HepG2 (cell line): ENCODE measurements at regions of chr22 and their contacts with region 1.

Region 1: GRCh38 chr22:28051787-28052356 is 132.8 kb upstream of the PITPNB start:
- DNase-seq: peak; percentile 43
- ATAC-seq: peak; percentile 77
- H3K4me3 ChIP-seq: no peak overlapping the region
- H3K27ac ChIP-seq: no peak overlapping the region
- H3K4me1 ChIP-seq: peaks cover 7% of the 10 kb centered on the region
- H3K27me3 ChIP-seq: no peaks in the 10 kb centered on the region
- CTCF ChIP-seq: peak; percentile 80
- EP300 ChIP-seq: no peak
- POLR2A ChIP-seq: no peak
- RAD21 ChIP-seq: peak; percentile 64

Region 2: DNA sequence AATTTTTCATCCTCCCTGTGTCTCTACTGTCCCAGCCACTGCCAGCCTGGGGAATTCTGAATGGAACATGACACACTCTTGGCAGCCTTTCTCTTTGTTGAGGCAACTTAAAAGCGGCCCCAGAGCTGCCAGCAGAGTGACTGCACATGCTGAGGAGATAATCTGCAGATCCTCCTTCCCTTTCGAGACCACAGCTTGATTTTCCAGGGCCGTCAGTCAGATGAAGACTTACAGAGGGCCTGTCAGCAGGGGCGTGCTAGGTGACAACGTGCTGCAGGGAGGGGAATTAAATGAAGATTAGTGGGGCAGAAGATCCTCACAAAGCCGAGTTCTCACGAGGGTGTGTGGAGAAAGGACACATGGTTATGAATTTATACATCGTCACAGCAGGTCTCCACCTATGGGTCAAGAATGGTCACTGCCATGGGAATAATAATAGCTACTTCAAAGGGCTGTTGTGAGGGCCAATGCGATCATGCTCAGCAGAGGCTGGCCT is 60.7 kb after region 1 on chr22:
- CTCF ChIA-PET with region 1: no interaction called
- POLR2A ChIA-PET with region 1: no interaction called
- in situ Hi-C with region 1: no loop called
- intact Hi-C with region 1: loop called (anchors 1 kb)
- DNase-seq: peak; percentile 25
- ATAC-seq: peak; percentile 84
- H3K4me3 ChIP-seq: no peak overlapping the region
- H3K27ac ChIP-seq: no peak overlapping the region
- H3K4me1 ChIP-seq: no peaks in the 10 kb centered on the region
- H3K27me3 ChIP-seq: no peaks in the 10 kb centered on the region
- CTCF ChIP-seq: peak; percentile 60
- EP300 ChIP-seq: no peak
- POLR2A ChIP-seq: no peak
- RAD21 ChIP-seq: no peak

Region 3: DNA sequence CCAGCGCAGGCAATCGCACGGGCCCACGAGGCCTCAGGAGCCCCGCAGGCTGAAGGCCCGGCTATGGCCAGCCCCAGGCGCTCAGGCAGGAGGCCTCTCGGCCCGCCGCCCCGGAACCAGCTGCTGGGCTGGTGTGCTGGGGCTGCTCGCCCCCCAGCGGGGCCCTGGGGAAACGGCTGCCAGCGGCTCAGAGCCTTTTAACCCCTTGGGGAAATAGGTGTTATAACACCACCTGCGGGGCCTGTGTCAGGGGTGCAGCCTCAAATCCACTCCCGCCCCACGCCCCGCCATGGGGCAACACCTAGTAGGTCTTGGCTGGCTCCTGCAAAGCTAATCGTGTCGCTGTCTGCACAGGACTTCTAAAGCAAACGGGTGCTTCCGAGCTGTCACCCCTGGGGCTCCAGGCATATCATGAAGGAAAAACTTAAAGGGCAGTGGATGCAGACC is 390.4 kb after region 1 on chr22:
- CTCF ChIA-PET with region 1: interaction called, 6 read pairs
- POLR2A ChIA-PET with region 1: no interaction called
- in situ Hi-C with region 1: loop called (anchors 5 kb)
- intact Hi-C with region 1: loop called (anchors 1 kb)
- DNase-seq: peak; percentile 74
- ATAC-seq: peak; percentile 99
- H3K4me3 ChIP-seq: peak overlapping the region; percentile 45 to 74 (median 54)
- H3K27ac ChIP-seq: peak overlapping the region; percentile 81
- H3K4me1 ChIP-seq: peaks cover 21% of the 10 kb centered on the region
- H3K27me3 ChIP-seq: no peaks in the 10 kb centered on the region
- CTCF ChIP-seq: peak; percentile 94
- EP300 ChIP-seq: no peak
- POLR2A ChIP-seq: no peak
- RAD21 ChIP-seq: peak; percentile 98